ENCODE measurements at regions of chr12 and their contacts with region 1.

Region 1: DNA sequence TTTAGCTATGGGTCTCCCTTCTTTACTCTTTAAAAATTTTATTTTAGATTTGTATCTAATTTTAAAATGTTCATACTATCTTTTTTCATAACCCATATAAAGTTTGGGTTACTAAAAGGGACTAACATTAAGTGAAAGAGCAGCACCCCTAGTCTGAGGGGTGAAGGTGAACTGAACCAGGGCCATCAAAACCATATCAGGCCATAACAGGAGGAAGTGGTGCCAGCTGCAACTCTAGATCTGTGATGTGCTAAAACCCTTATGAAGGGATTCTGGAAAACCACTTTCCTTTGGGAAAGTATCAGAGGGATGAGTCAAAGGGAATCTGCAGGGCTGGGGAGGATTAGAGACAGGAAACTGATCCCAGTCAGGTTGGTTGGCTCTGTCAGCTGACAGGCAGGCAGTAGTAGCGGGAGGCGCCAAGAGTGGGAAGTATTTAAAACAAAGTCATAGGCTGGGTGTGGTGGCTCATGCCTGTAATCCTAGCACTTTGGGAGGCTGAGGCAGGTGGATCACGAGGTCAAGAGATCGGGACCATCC is 162.5 kb downstream of the PPM1H start:
- DNase-seq: no peak
- ATAC-seq: no peak
- H3K4me3 ChIP-seq: no peak overlapping the region
- H3K27ac ChIP-seq: no peak overlapping the region
- H3K4me1 ChIP-seq: peaks cover 0 to 13% (median 0%) of the 10 kb centered on the region in 12 donors
- H3K27me3 ChIP-seq: no peaks in the 10 kb centered on the region
- CTCF ChIP-seq: no peak
- POLR2A ChIP-seq: no peak

Region 2: DNA sequence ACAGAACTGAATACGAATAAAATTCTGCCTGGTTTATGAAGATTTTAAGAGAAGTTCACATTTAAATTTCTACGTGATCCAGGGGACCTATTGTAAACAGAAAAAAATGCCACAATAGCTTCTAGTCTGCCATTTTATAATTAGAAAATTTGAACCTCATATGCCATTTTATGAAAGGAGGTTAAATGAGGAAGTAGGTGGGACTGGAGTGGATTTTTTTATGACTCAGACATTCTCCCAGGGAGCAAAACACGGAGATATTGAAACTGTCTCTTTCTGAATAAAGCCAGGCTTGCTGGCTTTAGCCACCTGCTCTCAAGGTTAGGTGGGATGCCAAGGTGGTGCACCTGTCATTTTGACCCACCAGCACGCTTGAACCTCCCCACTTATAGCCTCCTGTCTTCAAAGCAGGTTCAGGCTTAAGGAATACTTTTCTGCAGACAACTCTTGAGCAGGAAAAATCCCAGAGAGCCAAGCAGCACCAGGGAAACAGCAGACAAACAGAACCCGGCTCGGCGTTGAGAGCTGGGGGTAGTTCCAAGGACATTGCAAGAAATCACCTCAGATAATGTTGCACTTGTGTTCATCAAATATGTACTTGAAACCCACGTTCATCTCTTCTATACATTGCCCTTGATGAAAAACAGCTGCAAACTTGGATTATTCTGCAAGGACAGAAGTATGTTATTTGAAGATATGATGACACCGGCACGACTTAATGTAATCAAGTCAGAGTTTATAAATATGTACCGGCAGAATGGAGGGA is 41.2 kb before region 1 on chr12:
- intact Hi-C with region 1: loop called in 1 of 10 experiments (anchors 5 kb)
- DNase-seq: no peak
- ATAC-seq: peak in 3 of 4 donors; percentile 19 to 69 (median 38)
- H3K4me3 ChIP-seq: peak overlapping the region in 3 of 12 donors; percentile 5 to 21 (median 16)
- H3K27ac ChIP-seq: peak overlapping the region in 7 of 12 donors; percentile 2 to 70 (median 20)
- H3K4me1 ChIP-seq: peaks cover 0 to 67% (median 14%) of the 10 kb centered on the region in 12 donors
- H3K27me3 ChIP-seq: no peaks in the 10 kb centered on the region
- CTCF ChIP-seq: no peak
- POLR2A ChIP-seq: no peak

Region 3: DNA sequence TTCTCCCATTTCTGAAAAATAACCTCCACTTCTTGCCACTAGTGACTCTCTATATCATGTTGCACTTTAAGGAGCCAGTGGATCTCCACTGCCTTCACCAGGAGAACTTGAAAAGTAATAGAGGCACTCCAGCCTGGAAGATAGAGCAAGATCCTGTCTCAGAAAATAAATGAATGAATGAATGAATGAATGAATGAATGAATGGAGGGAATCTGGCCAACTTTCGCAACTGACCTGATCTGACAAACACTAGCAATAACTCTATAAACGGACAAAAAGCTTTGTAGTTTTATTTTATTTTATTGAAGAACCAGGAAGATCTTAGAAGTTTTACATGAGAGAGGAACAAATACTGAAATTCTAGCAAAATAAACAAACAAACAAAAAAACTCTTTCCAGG is 488.2 kb after region 1 on chr12:
- intact Hi-C with region 1: no loop called
- DNase-seq: no peak
- ATAC-seq: no peak
- H3K4me3 ChIP-seq: no peak overlapping the region
- H3K27ac ChIP-seq: no peak overlapping the region
- H3K4me1 ChIP-seq: no peaks in the 10 kb centered on the region
- H3K27me3 ChIP-seq: no peaks in the 10 kb centered on the region
- CTCF ChIP-seq: no peak
- POLR2A ChIP-seq: no peak